ENCODE measurements at regions of chr5 and their contacts with region 1.

Region 1: DNA sequence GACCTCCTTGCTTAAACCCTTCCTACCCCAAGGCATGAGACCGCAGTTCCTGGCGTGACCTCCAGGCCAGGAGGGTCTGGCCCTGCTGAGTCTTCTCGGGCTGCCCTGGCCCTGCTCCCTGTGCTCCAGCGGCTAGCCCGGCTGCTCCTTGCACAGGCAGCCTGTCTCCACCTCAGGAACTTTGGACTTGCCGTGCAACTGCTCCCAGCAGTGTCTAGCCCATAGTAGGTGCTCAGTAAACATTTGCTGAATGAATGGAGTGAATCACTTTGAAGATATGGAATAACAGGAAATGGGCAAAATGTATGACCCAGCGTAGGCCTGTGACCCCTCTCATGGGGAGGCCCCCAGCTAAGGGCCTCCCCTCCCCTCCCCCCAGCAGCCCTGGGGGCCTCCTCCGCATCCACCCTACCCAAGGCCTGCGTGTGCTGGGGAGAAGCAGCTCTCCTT is 127.1 kb downstream of the ZNF354C start:
- DNase-seq: no peak
- H3K4me3 ChIP-seq: no peak overlapping the region
- CTCF ChIP-seq: peak; percentile 29

Region 2: DNA sequence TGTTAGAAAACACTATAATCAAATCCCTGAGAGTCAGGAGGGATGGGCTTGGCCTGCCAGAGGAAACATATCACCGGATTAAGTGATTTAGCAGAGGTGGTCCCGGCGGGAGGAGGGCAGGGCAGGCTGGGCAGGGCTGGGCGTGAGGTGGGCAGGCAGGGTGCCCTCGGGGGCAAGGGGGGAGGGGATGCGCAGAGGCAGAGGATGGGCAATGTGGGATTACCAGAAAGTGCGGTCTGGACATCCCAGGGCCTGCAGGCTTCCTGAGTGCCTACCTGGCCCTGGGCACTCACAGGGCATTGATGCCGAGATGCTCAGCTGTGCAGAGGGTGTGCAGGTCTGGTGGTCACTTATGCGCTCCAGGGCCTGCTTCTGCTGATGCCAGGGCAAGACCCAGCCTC is 42.8 kb after region 1 on chr5:
- in situ Hi-C with region 1: loop called (anchors 5 kb)
- DNase-seq: no peak
- H3K4me3 ChIP-seq: no peak overlapping the region
- CTCF ChIP-seq: no peak

Measured in astrocyte of the cerebellum (primary cell).